ENCODE measurements at regions of chr19 and their contacts with region 1.

Region 1: GRCh38 chr19:34171877-34172660 is at the start of gene LSM14A:
- DNase-seq: peak; percentile 98
- ATAC-seq: peak; percentile 88
- H3K4me3 Mint-ChIP-seq: peak within 1 kb of the TSS; percentile 97
- H3K27ac Mint-ChIP-seq: peak within 1 kb of the TSS; percentile 97
- H3K4me1 Mint-ChIP-seq: peaks cover 33% of the 10 kb centered on the region
- H3K27me3 Mint-ChIP-seq: peaks cover 2% of the 10 kb centered on the region
- total RNA-seq, gene LSM14A: 141 to 156 TPM

Region 2: GRCh38 chr19:34134190-34135053 is 37.6 kb before region 1 on chr19:
- POLR2A ChIA-PET with region 1: interaction called, 15 read pairs
- DNase-seq: peak; percentile 98
- ATAC-seq: peak; percentile 97
- H3K4me3 Mint-ChIP-seq: peak overlapping the region; percentile 85
- H3K27ac Mint-ChIP-seq: peak overlapping the region; percentile 87
- H3K4me1 Mint-ChIP-seq: no peaks in the 10 kb centered on the region
- H3K27me3 Mint-ChIP-seq: no peaks in the 10 kb centered on the region

Region 3: GRCh38 chr19:34155686-34156085 is 16.4 kb before region 1 on chr19:
- POLR2A ChIA-PET with region 1: no interaction called
- DNase-seq: no peak
- ATAC-seq: no peak
- H3K4me3 Mint-ChIP-seq: no peak overlapping the region
- H3K27ac Mint-ChIP-seq: no peak overlapping the region
- H3K4me1 Mint-ChIP-seq: no peaks in the 10 kb centered on the region
- H3K27me3 Mint-ChIP-seq: peaks cover 9% of the 10 kb centered on the region

Region 4: GRCh38 chr19:34253699-34254551 is 81.9 kb after region 1 on chr19:
- POLR2A ChIA-PET with region 1: no interaction called
- DNase-seq: peak; percentile 90
- ATAC-seq: peak; percentile 97
- H3K4me3 Mint-ChIP-seq: peak overlapping the region; percentile 99
- H3K27ac Mint-ChIP-seq: peak overlapping the region; percentile 99
- H3K4me1 Mint-ChIP-seq: peaks cover 12% of the 10 kb centered on the region
- H3K27me3 Mint-ChIP-seq: no peaks in the 10 kb centered on the region